Colonic mucosa (tissue), 4 donors: ENCODE measurements at regions of chr14 and their contacts with region 1.

Region 1: DNA sequence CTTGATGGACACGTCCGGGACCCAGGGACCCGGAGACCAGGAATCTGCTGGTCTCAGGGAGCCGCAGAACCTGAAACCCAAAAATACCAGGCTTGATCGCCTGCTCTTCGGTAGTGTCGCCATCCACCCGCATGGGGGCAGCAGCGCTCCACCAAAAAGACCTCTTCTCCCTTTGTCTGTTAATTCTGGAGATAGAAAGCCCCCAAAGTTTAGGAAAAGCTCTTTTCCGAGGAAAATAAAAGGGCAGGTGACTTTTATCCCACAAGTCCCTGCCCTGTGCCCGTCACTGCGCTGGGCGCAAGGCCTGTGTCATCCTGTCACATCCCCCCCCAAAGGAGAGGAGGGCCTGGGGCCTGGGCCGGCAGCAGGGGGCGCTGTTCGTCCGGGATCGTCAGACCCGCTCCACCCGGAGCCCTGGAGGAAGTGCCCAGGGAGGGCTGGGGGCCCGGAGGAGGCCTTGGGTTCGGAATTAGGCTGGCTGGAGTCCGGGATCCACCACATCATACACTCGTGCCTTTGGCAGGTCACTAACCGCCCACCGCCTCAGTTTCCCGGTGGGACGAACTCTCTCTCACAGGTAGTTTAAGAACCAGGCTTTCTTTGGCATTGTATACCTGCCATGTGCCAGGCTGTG is 31.9 kb downstream of the DAD1 start:
- DNase-seq: peak; percentile 92
- H3K4me3 ChIP-seq: peak overlapping the region; percentile 22
- H3K27ac ChIP-seq: peak overlapping the region; percentile 67
- H3K4me1 ChIP-seq: peaks cover 19% of the 10 kb centered on the region
- H3K27me3 ChIP-seq: no peaks in the 10 kb centered on the region
- CTCF ChIP-seq: peak; percentile 98

Region 2: DNA sequence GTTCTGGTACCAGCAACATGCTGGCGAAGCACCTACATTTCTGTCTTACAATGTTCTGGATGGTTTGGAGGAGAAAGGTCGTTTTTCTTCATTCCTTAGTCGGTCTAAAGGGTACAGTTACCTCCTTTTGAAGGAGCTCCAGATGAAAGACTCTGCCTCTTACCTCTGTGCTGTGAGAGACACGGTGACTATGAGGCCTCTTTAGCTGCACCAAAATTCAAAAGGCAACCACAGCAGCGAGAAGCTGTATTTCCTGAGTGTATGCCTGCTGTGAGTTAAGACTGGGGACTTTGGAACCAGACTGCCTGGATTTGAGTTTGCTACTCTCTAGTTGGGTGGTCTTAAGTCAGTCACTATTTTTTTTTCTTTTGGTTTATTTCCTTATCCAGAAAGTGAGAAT is 913.7 kb before region 1 on chr14:
- intact Hi-C with region 1: no loop called
- DNase-seq: no peak
- H3K4me3 ChIP-seq: no peak overlapping the region
- H3K27ac ChIP-seq: no peak overlapping the region
- H3K4me1 ChIP-seq: no peaks in the 10 kb centered on the region
- H3K27me3 ChIP-seq: no peaks in the 10 kb centered on the region
- CTCF ChIP-seq: no peak

Region 3: DNA sequence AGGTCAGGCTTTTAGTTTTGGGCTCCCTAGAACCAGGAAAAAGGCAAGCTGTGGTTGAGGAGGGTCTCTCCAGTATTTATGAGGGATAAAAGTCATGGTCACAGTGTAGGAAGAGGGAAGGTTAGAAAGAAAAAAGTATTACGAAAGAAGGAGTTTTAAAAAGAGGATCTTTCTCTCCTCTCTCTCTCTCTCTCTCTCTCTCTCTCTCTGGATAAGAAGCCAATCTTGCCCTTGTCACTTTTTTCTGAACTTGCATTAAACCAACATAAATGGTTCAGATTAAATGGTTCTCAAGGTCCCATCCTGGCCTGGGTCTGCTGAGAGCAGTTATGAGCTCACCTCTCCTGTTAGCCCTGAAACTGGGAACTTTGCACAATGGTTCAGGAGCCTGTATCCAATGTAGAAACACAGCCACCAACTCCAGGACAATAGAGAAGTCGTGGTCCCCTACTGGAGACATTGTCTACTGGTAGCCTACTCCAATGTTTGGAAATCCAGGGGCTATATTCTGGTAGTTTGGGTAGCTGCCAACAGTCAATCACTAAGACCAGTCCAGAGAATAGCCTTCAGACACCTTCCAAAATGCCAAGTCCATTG is 100.0 kb before region 1 on chr14:
- intact Hi-C with region 1: no loop called
- DNase-seq: no peak
- H3K4me3 ChIP-seq: no peak overlapping the region
- H3K27ac ChIP-seq: no peak overlapping the region
- H3K4me1 ChIP-seq: no peaks in the 10 kb centered on the region
- H3K27me3 ChIP-seq: no peaks in the 10 kb centered on the region
- CTCF ChIP-seq: no peak

Region 4: GRCh38 chr14:22852940-22853767 is 296.0 kb after region 1 on chr14:
- intact Hi-C with region 1: loop called (anchors 5 kb)
- DNase-seq: peak; percentile 97
- H3K4me3 ChIP-seq: peak overlapping the region; percentile 28
- H3K27ac ChIP-seq: peak overlapping the region; percentile 64
- H3K4me1 ChIP-seq: peaks cover 4% of the 10 kb centered on the region
- H3K27me3 ChIP-seq: no peaks in the 10 kb centered on the region
- CTCF ChIP-seq: peak; percentile 94

Region 5: GRCh38 chr14:22986508-22987054 is 429.5 kb after region 1 on chr14:
- intact Hi-C with region 1: loop called (anchors 2 kb)
- DNase-seq: peak; percentile 93
- H3K4me3 ChIP-seq: no peak overlapping the region
- H3K27ac ChIP-seq: no peak overlapping the region
- H3K4me1 ChIP-seq: no peaks in the 10 kb centered on the region
- H3K27me3 ChIP-seq: peaks cover 6% of the 10 kb centered on the region
- CTCF ChIP-seq: peak; percentile 95

Region 6: GRCh38 chr14:23483236-23483854 is 926.2 kb after region 1 on chr14:
- intact Hi-C with region 1: no loop called
- DNase-seq: no peak
- H3K4me3 ChIP-seq: no peak overlapping the region
- H3K27ac ChIP-seq: no peak overlapping the region
- H3K4me1 ChIP-seq: no peaks in the 10 kb centered on the region
- H3K27me3 ChIP-seq: no peaks in the 10 kb centered on the region
- CTCF ChIP-seq: no peak